Activated T-helper 1 cell treated with anti-CD3 and anti-CD28 coated beads, Interleukin-12 subunit alpha, Interleukin-12 subunit beta, Interleukin-2, Interleukin-4 antibody, amounts not matched to agents 30 ng/mL and 10 ng/mL and 1 ng/mL, durations not matched to agents 14 hours and 24 hours and 36 hours (primary cell): ENCODE measurements at regions of chr22 and their contacts with region 1.

Region 1: DNA sequence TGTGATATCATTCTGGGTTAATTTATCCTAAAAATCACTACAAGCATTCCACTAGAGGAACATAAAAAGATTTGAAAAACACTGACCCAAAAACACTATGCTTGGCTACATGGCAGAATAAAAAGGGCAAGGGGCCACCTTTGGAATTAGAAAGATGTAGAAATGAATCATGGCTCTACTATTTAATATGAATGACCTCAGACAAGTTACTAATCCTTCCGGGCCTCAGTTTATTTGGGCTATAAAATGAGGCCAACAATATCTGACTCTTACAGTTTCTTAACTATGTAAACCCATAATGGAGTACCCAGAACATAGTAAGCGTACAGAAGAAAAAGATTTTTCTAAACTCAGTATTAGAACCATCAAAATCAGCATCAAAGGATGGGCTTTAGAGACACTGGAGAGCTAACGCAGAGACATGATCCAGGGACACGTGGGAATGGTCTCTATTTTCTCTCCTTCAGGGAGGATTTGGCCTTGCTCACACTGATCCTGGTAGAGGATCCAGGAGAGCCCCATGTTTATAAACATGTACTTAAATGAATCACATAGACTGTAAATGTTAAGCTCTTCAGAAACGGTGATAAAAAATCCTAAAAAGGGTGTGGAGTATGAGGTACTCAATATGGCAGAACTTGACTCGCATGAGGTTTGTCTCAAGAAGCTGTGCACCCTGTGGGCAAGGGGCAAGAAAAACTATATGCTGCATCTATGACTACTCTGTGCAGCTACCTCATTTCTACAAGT is 288.4 kb upstream of the PITPNB start:
- DNase-seq: no peak
- H3K4me3 Mint-ChIP-seq: no peak overlapping the region
- H3K27ac Mint-ChIP-seq: no peak overlapping the region
- H3K4me1 Mint-ChIP-seq: no peaks in the 10 kb centered on the region
- H3K27me3 Mint-ChIP-seq: peaks cover 7% of the 10 kb centered on the region

Region 2: GRCh38 chr22:28142361-28142961 is 65.0 kb before region 1 on chr22:
- intact Hi-C with region 1: loop called (anchors 10 kb)
- DNase-seq: no peak
- H3K4me3 Mint-ChIP-seq: no peak overlapping the region
- H3K27ac Mint-ChIP-seq: no peak overlapping the region
- H3K4me1 Mint-ChIP-seq: no peaks in the 10 kb centered on the region
- H3K27me3 Mint-ChIP-seq: peaks cover 8% of the 10 kb centered on the region

Region 3: DNA sequence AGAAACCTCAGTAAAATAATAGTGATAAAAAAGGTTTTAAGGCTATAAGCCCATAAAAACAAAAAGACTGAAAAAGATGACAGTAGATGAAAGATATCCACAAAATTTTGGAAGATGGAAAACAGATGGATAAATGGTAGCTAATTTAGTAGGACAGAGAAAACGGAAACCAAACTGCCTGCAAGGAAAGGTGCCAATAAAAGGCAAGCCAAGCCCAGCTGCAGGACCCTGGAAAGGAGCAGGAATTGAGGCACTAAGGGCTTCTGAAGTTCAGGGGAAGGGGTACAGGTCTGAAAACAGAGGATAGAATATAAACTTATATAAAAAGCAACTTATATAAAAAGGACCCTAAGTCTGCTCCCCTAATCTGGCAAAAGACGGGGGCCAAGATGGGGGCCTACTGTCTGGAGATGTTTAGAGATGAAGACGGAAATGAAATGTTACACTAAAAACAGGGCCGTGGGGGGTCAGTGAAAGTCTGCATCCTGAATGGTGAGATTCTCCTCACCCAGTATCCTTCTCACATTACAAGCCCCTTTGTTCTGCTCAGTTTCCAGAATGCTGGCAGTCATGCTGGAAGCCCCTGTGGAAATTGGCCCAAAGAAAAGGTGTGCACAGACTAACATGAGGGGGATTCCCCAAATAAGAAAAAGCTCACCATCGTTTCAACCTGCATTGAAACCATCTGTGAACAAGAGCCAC is 19.1 kb before region 1 on chr22:
- intact Hi-C with region 1: no loop called
- DNase-seq: no peak
- H3K4me3 Mint-ChIP-seq: no peak overlapping the region
- H3K27ac Mint-ChIP-seq: no peak overlapping the region
- H3K4me1 Mint-ChIP-seq: no peaks in the 10 kb centered on the region
- H3K27me3 Mint-ChIP-seq: peaks cover 6% of the 10 kb centered on the region